MCF 10A (cell line): ENCODE measurements at regions of chr18 and their contacts with region 1.

Region 1: DNA sequence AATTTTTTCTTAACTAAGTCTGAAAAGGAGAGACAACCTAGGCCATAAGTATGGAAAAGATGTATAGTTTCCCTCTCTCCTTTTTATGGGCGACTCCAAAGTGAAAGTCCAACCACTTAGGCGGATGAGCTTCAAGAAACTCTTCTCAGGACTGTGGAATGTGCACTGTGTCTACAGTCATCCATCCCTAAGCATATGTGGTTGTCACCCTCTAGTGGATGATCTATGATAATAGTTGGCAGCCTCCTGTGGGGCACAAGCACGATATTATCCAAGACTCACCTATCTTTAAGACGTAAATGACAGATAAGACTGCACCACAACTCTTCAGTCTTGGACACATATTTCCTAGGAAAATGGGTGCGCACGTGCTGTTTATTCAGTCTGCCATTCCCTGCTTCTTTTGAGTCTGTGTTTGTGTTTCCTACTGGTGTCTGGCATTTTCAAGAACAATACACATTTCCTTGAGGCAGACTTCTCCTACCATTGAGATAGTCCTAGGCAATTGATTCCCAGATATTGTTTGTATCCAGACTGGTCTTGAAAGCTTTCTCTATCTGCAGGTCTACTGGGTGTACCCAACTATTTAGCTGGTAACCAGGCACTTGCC is 145.5 kb upstream of the CTAGE1 start:
- DNase-seq: peak; percentile 87
- H3K4me3 Mint-ChIP-seq: no peak overlapping the region
- H3K27ac Mint-ChIP-seq: peak overlapping the region; percentile 12
- H3K4me1 Mint-ChIP-seq: peaks cover 18% of the 10 kb centered on the region
- H3K27me3 Mint-ChIP-seq: no peaks in the 10 kb centered on the region
- CTCF ChIP-seq: peak; percentile 72

Region 2: DNA sequence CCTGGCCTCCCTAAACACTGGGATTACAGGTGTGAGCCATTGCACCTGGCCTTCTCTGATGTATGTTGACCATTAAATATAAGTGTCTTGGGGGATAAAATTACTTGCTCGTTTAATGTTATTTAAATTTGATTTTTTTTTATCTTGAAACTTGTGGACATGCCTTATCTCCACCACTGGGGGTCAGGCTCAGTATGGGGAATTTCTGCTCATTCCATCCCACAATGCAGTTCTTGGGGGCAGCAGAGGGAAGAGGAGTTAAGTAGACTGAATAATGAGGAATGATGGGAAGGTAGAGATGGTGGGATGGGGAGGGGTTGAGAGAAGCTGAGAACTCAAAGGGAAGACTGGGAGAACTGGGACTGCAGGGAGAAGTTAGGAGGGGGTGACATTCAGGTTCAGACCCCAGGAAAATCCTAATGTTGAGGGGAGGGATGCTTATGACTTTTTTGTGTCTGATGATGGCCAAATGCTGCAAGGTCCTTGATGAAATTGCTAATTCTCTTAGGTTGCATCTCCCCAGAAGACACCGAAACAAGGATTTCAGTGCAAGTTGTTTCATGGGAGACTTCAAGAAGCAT is 648.4 kb before region 1 on chr18:
- CTCF ChIA-PET with region 1: interaction called, 15 read pairs
- POLR2A ChIA-PET with region 1: no interaction called
- intact Hi-C with region 1: loop called (anchors 1 kb)
- DNase-seq: peak; percentile 53
- H3K4me3 Mint-ChIP-seq: no peak overlapping the region
- H3K27ac Mint-ChIP-seq: no peak overlapping the region
- H3K4me1 Mint-ChIP-seq: peaks cover 6% of the 10 kb centered on the region
- H3K27me3 Mint-ChIP-seq: no peaks in the 10 kb centered on the region
- CTCF ChIP-seq: peak; percentile 55

Region 3: GRCh38 chr18:22108674-22109073 is 454.5 kb before region 1 on chr18:
- CTCF ChIA-PET with region 1: no interaction called
- POLR2A ChIA-PET with region 1: no interaction called
- intact Hi-C with region 1: loop called (anchors 1 kb)
- DNase-seq: peak; percentile 25
- H3K4me3 Mint-ChIP-seq: no peak overlapping the region
- H3K27ac Mint-ChIP-seq: no peak overlapping the region
- H3K4me1 Mint-ChIP-seq: peaks cover 7% of the 10 kb centered on the region
- H3K27me3 Mint-ChIP-seq: no peaks in the 10 kb centered on the region
- CTCF ChIP-seq: no peak

Region 4: GRCh38 chr18:22223254-22223960 is 339.8 kb before region 1 on chr18:
- CTCF ChIA-PET with region 1: interaction called, 4 read pairs
- POLR2A ChIA-PET with region 1: no interaction called
- intact Hi-C with region 1: loop called (anchors 5 kb)
- DNase-seq: peak; percentile 98
- H3K4me3 Mint-ChIP-seq: no peak overlapping the region
- H3K27ac Mint-ChIP-seq: peak overlapping the region; percentile 27
- H3K4me1 Mint-ChIP-seq: peaks cover 21% of the 10 kb centered on the region
- H3K27me3 Mint-ChIP-seq: no peaks in the 10 kb centered on the region
- CTCF ChIP-seq: no peak

Region 5: DNA sequence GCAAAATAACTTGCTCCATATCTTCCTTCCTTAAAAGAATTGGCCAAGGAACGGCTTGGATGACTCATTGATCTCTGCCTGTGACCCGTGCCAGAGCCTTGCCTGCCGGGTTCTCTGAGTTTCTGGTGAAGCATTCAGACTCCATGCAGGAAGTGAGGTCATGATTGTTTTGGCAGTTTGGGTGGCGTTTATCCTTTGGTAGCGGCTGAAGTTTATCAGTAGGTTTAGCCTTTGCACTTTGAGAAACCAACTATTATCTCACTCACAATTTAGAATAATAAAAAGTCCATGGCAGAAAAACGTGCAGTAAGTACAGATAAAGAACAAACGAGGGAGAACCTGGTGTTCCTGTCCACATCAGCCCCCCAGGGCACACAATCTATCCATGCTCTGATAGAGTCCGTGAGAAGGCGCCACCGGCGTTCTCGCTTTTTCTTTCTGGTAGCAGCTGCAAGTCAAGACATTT is 130.5 kb before region 1 on chr18:
- CTCF ChIA-PET with region 1: no interaction called
- POLR2A ChIA-PET with region 1: no interaction called
- intact Hi-C with region 1: loop called (anchors 5 kb)
- DNase-seq: peak; percentile 94
- H3K4me3 Mint-ChIP-seq: peak overlapping the region; percentile 46
- H3K27ac Mint-ChIP-seq: peak overlapping the region; percentile 84
- H3K4me1 Mint-ChIP-seq: peaks cover 19% of the 10 kb centered on the region
- H3K27me3 Mint-ChIP-seq: no peaks in the 10 kb centered on the region
- CTCF ChIP-seq: no peak

Region 6: GRCh38 chr18:22551536-22552151 is 11.6 kb before region 1 on chr18:
- CTCF ChIA-PET with region 1: interaction called, 12 read pairs
- POLR2A ChIA-PET with region 1: interaction called, 10 read pairs
- intact Hi-C with region 1: no loop called
- DNase-seq: peak; percentile 90
- H3K4me3 Mint-ChIP-seq: no peak overlapping the region
- H3K27ac Mint-ChIP-seq: no peak overlapping the region
- H3K4me1 Mint-ChIP-seq: peaks cover 2% of the 10 kb centered on the region
- H3K27me3 Mint-ChIP-seq: no peaks in the 10 kb centered on the region
- CTCF ChIP-seq: no peak

Region 7: DNA sequence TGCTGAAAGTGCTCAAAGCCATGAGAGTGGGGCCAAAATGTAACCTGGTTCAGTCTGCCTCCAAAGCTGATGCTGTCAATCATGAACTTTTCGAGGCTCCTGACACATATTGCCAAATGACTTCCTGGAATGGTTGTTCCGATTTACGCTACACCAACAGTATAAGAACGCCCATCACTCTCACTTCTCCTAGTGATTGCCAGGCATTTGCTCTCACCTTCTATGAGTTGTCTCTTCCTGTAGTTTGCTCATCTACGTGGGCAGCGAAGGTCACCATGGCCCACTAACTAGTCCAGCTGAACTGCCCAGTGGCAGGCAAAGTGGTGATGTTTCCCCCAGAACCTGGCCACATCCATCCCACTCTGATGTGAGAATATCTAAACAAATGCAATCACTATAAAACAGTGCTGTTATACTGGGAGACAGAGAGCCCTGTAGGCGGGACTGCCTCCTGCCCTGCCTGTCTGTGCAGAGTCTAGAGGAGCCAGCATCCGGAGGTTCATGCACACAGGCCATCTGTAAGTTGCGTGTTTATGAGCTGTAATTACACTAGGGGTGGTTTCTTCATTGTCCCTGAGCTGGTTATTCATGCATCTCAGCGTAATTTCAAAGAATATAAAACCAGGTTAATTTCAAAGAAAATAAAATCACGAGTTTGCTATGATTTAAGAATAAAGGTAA is 563.3 kb after region 1 on chr18:
- CTCF ChIA-PET with region 1: no interaction called
- POLR2A ChIA-PET with region 1: no interaction called
- intact Hi-C with region 1: no loop called
- DNase-seq: no peak
- H3K4me3 Mint-ChIP-seq: no peak overlapping the region
- H3K27ac Mint-ChIP-seq: no peak overlapping the region
- H3K4me1 Mint-ChIP-seq: no peaks in the 10 kb centered on the region
- H3K27me3 Mint-ChIP-seq: no peaks in the 10 kb centered on the region
- CTCF ChIP-seq: no peak